GM13977 (cell line): ENCODE measurements at regions of chr9 and their contacts with region 1.

Region 1: DNA sequence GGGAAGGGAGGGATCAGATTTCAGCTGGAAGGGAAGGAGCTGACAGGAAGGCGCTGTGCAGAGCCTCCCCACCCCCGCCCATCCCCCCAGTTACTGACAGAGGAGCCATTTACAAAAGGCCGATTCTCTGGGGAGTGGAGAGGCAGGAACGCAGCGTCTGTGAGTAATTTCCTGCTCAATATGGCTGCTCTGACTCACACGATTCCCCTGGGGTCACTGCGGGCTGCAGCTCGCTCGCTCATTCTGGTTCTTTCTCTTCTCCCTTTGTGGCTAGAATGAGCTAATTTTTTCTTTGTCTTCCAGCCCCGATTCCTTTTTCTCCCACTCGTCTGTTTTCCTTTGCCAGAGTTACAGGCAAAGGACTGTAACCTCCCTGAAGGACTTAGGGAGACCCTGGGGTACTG is 28.8 kb downstream of the PTPA start:
- DNase-seq: peak; percentile 90
- CTCF ChIP-seq: no peak

Region 2: GRCh38 chr9:129352146-129352865 is 212.3 kb after region 1 on chr9:
- in situ Hi-C with region 1: no loop called
- DNase-seq: peak; percentile 28
- CTCF ChIP-seq: no peak

Region 3: DNA sequence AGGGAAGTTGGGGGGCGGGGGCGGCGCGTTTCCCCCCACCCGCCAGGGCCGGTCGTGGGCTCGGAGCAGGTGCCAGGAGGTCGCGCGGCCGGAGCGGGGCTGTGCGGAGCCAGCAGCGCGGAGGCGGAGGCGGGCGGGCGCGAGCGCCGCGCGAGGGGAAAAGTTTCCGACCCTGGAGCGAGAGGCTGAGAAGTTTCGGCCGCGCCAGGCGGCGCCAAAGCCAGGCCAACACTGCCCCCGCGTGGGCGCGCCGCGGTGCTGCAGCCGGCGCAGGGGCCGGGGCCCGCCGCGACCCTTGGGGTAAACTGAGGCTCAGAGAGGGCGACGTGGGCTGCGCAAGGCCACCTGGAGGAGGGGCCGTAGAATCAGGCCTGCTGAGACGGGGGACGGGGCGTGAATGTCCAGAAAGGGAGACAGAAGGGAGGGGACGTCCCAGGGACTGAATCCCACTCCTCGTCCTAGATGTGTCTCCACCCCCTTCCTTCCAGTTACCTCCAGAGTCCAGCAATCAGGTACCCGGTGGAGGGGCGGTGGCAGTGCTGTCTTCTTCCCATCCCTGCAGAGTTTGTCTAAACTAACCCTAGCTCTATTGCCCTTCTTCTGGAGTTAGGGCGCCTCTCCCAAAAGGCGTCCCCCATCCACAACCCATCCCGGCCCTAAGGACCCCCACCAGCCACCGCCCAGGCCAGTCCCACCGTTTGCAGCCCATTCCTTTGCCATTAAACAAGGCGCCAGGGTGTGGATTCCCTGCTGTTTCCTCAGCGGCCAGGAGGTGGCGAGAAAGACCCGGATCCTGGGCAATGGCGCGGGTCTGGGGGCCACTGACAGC is 470.7 kb after region 1 on chr9:
- in situ Hi-C with region 1: loop called (anchors 10 kb)
- DNase-seq: peak; percentile 89
- CTCF ChIP-seq: peak; percentile 98

Region 4: DNA sequence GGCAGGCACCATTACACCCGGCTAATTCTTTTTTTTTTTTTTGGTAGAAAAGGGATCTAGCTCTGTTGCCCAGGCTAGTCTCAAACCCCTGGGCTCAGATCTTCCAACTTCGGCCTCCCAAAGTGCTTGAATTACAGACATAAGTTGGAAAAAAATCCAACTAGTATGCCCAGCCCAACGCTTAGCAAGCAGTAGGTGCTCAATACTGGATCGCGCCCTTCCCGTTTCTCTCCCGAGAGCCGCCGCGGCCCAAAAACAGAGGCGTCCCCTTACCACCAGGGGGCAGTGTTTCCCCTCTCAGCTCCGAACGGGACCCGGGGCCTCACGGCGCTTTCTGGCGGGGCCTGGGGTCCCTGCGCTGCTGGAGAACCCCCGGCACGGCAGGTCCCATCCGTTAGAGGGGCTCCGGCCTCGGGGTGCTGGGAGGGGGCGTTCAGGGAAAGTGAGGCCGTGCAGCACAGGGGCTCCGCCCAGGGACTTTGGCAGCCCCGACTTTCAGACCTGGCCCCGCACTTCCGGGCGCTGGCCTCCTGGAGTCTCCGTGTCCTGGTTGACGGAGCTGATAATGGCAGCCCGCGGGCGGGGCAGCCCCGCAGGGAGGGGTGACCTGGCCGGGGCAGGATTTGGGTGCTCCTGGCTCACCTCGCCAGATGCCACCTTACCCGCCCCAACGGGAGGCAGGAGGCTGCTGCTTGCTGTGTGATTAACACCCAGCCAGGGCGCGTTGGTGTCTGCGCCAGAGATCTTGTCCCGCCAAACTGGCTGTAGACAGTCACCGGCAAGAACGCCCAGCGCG is 597.7 kb after region 1 on chr9:
- in situ Hi-C with region 1: no loop called
- DNase-seq: peak; percentile 91
- CTCF ChIP-seq: peak; percentile 92

Region 5: GRCh38 chr9:129938291-129938979 is 798.4 kb after region 1 on chr9:
- in situ Hi-C with region 1: no loop called
- DNase-seq: no peak
- CTCF ChIP-seq: no peak